ENCODE measurements at regions of chrX and their contacts with region 1.

Region 1: GRCh38 chrX:23907498-23908218 is at the starts of genes APOO and CXorf58:
- DNase-seq: peak; percentile 89 to 95 (median 91)
- H3K4me3 ChIP-seq: peak within 1 kb of the TSS in 2 of 4 donors; percentile 32 to 43
- H3K27ac ChIP-seq: peak within 1 kb of the TSS; percentile 76 to 87 (median 79)
- H3K4me1 ChIP-seq: peaks cover 0 to 9% of the 10 kb centered on the region in 2 donors
- H3K27me3 ChIP-seq: no peaks in the 10 kb centered on the region
- CTCF ChIP-seq: peak; percentile 62 to 94 (median 89)
- POLR2A ChIP-seq: peak in 1 of 2 donors; percentile 61
- total RNA-seq, gene APOO: 12.9 to 72.7 (median 26.7) TPM
- total RNA-seq, gene CXorf58: 0.11 to 0.77 (median 0.36) TPM in 6 of 9 donors, not detected in the others

Region 2: GRCh38 chrX:23694606-23695005 is 213.1 kb before region 1 on chrX:
- intact Hi-C with region 1: loop called (anchors 5 to 10 kb)
- DNase-seq: peak; percentile 43 to 77 (median 61)
- H3K4me3 ChIP-seq: no peak overlapping the region
- H3K27ac ChIP-seq: no peak overlapping the region
- H3K4me1 ChIP-seq: no peaks in the 10 kb centered on the region
- H3K27me3 ChIP-seq: no peaks in the 10 kb centered on the region
- CTCF ChIP-seq: peak in 5 of 6 experiments; percentile 20 to 58 (median 31)
- POLR2A ChIP-seq: no peak

Region 3: DNA sequence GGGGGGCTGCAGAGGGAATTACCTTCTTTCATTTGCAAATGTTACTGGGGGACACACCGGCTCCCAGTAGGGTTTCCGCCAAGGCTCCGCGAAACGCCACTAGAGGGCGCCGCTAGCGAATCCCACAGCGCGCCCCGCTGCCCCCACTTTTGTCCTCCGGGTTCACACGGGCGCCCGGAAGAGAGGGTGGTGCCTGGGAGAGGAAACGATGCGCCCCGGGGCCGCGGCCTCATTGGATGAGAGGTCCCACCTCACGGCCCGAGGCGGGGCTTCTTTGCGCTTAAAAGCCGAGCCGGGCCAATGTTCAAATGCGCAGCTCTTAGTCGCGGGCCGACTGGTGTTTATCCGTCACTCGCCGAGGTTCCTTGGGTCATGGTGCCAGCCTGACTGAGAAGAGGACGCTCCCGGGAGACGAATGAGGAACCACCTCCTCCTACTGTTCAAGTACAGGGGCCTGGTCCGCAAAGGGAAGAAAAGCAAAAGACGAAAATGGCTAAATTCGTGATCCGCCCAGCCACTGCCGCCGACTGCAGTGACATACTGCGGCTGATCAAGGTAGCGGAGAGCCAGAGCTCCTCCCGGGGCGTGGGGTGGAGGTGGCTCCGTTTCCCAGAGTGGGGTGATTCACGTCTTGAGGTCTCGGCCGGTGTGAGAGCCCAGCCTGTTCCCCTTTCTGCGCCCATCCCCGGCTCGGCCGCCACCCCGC is 124.6 kb before region 1 on chrX and contains the start of gene SAT1:
- intact Hi-C with region 1: loop called in 1 of 2 experiments (anchors 10 kb)
- DNase-seq: peak; percentile 93 to 98 (median 96)
- H3K4me3 ChIP-seq: peak within 1 kb of the TSS in 3 of 4 donors; percentile 18 to 75 (median 57)
- H3K27ac ChIP-seq: peak within 1 kb of the TSS; percentile 76 to 97 (median 89)
- H3K4me1 ChIP-seq: no peaks in the 10 kb centered on the region
- H3K27me3 ChIP-seq: no peaks in the 10 kb centered on the region
- CTCF ChIP-seq: peak; percentile 47 to 80 (median 72)
- POLR2A ChIP-seq: peak; percentile 99
- total RNA-seq, gene SAT1: 129 to 905 (median 353) TPM